ENCODE measurements at regions of chr17 and their contacts with region 1.

Region 1: DNA sequence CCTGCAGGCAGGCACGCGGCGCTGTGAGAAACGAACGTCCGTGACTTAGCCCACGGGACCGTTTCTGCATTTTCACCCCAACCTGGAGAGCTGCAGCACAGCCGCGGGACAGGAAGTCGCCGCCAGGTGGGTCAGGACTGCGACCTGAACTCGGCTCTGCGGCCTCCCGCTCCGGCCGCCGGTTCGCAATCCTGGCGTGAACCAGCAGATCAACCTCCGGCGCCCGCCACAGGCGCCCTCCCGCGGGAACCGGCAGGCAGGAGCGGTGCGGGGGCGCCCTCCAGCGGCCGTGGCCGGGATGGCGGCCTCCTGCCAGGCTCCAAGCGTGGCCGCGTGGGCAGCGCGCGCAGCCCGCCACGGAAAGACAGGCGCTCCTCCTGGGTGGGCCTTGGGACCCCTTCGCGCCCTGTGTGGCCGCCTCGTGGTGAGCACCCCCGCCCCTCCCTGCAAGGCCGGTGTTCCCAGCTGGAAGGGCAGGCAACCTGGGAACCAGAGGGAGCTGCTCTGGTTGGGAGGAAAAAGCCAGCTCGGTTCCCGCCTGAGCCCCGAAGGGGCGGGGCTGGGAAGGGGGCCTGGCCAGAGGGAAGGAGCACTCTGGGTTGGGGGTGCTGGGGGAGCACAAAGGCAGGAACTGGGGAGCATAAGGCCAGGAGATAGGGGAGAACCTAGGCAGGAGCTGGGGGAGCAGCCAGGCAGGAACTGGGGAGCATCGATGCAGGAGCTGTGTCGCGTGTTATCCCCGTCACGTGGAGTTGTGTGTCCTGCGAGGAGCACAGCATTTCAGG is 28.2 kb downstream of the ACTG1 start:
- DNase-seq: peak; percentile 79 to 87 (median 82)
- H3K4me3 ChIP-seq: peak overlapping the region; percentile 37
- H3K4me3 Mint-ChIP-seq: peak overlapping the region in 2 of 7 donors; percentile 47 to 66
- H3K27ac ChIP-seq: peak overlapping the region; percentile 31
- H3K27ac Mint-ChIP-seq: no peak overlapping the region
- H3K4me1 ChIP-seq: peaks cover 20% of the 10 kb centered on the region
- H3K4me1 Mint-ChIP-seq: peaks cover 4 to 26% (median 11%) of the 10 kb centered on the region in 3 donors
- H3K27me3 ChIP-seq: peaks cover 20% of the 10 kb centered on the region
- H3K27me3 Mint-ChIP-seq: peaks cover 20 to 36% of the 10 kb centered on the region in 2 donors

Region 2: GRCh38 chr17:81253358-81254131 is 230.8 kb before region 1 on chr17:
- CTCF ChIA-PET with region 1: interaction called, 40 read pairs
- POLR2A ChIA-PET with region 1: no interaction called
- DNase-seq: peak; percentile 31 to 68 (median 52)
- H3K4me3 ChIP-seq: no peak overlapping the region
- H3K4me3 Mint-ChIP-seq: peak overlapping the region in 1 of 7 donors; percentile 2
- H3K27ac ChIP-seq: no peak overlapping the region
- H3K27ac Mint-ChIP-seq: peak overlapping the region in 6 of 8 donors; percentile 7 to 87 (median 58)
- H3K4me1 ChIP-seq: no peaks in the 10 kb centered on the region
- H3K4me1 Mint-ChIP-seq: peaks cover 9 to 11% (median 10%) of the 10 kb centered on the region in 3 donors
- H3K27me3 ChIP-seq: no peaks in the 10 kb centered on the region
- H3K27me3 Mint-ChIP-seq: peaks cover 0 to 2% of the 10 kb centered on the region in 2 donors

Region 3: GRCh38 chr17:81291662-81292061 is 192.7 kb before region 1 on chr17:
- CTCF ChIA-PET with region 1: interaction called, 28 read pairs
- POLR2A ChIA-PET with region 1: no interaction called
- DNase-seq: peak; percentile 53 to 76 (median 62)
- H3K4me3 ChIP-seq: no peak overlapping the region
- H3K4me3 Mint-ChIP-seq: peak overlapping the region in 6 of 7 donors; percentile 7 to 81 (median 38)
- H3K27ac ChIP-seq: no peak overlapping the region
- H3K27ac Mint-ChIP-seq: peak overlapping the region in 7 of 8 donors; percentile 32 to 82 (median 63)
- H3K4me1 ChIP-seq: peaks cover 31% of the 10 kb centered on the region
- H3K4me1 Mint-ChIP-seq: peaks cover 37 to 63% (median 62%) of the 10 kb centered on the region in 3 donors
- H3K27me3 ChIP-seq: no peaks in the 10 kb centered on the region
- H3K27me3 Mint-ChIP-seq: no peaks in the 10 kb centered on the region

Region 4: GRCh38 chr17:81508639-81509206 is 24.3 kb after region 1 on chr17:
- CTCF ChIA-PET with region 1: interaction called, 10 read pairs
- POLR2A ChIA-PET with region 1: interaction called, 6 read pairs
- DNase-seq: no peak
- H3K4me3 ChIP-seq: peak overlapping the region; percentile 92
- H3K4me3 Mint-ChIP-seq: peak overlapping the region; percentile 93 to 99 (median 98)
- H3K27ac ChIP-seq: peak overlapping the region; percentile 85
- H3K27ac Mint-ChIP-seq: peak overlapping the region; percentile 90 to 98 (median 96)
- H3K4me1 ChIP-seq: peaks cover 19% of the 10 kb centered on the region
- H3K4me1 Mint-ChIP-seq: peaks cover 34 to 53% (median 41%) of the 10 kb centered on the region in 3 donors
- H3K27me3 ChIP-seq: no peaks in the 10 kb centered on the region
- H3K27me3 Mint-ChIP-seq: peaks cover 0 to 15% of the 10 kb centered on the region in 2 donors

Measured in CD8-positive, alpha-beta memory T cell (primary cell).